AG04450 (cell line): ENCODE measurements at regions of chr1 and their contacts with region 1.

Region 1: DNA sequence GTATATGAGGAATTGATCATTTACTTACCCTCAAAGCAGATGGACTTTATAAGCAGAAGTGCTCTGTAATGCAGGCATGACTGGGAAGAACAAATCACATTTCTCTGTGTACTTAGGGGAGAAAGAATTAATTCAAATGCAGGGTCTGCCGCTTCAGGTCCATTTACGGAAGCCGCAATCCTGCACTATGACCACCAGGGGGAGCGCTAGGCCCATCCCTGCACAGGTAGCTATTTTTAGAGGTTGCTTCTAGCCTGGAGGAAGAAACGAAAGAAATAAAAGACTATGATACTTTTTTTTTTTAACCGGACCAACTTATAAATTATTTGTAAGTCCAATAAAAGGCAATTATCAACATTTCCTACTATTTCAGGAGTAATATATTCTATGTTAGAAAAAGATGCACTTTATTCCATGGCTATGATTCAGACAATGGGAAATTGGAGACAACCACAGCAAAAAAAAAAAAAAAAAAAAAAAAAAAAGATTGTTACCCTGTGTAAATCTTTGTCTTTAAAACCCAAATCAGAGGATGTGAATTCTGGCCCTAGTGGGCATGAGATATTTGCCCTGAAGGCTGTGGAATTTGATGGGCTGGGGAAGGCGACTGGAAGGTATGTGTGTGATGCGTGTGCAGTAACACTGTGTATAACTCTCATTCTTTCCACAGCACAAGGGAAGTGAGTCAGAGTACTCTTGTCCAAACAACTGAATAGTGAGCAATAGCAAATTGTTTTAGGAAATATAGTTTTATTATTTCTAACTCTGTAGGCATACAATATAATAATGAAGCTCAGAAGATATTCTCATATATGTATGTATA is 12.9 kb upstream of the FYB2 start:
- DNase-seq: peak; percentile 91
- H3K4me3 ChIP-seq: no peak overlapping the region
- H3K27ac ChIP-seq: peak overlapping the region; percentile 80
- H3K27me3 ChIP-seq: no peaks in the 10 kb centered on the region
- CTCF ChIP-seq: peak; percentile 98

Region 2: DNA sequence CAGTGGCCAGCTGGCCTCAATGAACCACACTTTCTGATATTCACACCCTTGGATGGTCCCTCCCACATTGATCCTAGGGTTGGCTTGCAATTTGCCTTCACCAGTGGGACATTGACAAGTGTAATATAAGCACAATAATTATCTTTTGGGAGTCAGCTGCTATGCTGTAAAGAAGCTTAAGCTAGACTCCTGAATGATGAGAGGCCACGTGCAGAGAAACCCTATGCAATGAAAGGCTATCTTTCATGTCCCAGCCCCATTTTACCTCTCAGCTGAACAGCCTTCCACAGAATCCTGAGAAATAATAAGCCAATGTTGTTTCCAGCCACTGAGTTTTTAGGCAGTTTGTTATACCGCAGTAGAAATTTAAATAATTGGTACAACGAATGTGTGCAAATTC is 11.5 kb after region 1 on chr1:
- CTCF ChIA-PET with region 1: interaction called, 29 read pairs
- POLR2A ChIA-PET with region 1: no interaction called
- DNase-seq: no peak
- H3K4me3 ChIP-seq: no peak overlapping the region
- H3K27ac ChIP-seq: no peak overlapping the region
- H3K27me3 ChIP-seq: peaks cover 6% of the 10 kb centered on the region
- CTCF ChIP-seq: no peak

Region 3: GRCh38 chr1:56967900-56968832 is 136.1 kb after region 1 on chr1:
- CTCF ChIA-PET with region 1: interaction called, 43 read pairs
- POLR2A ChIA-PET with region 1: no interaction called
- DNase-seq: no peak
- H3K4me3 ChIP-seq: no peak overlapping the region
- H3K27ac ChIP-seq: no peak overlapping the region
- H3K27me3 ChIP-seq: no peaks in the 10 kb centered on the region
- CTCF ChIP-seq: peak; percentile 70

Region 4: GRCh38 chr1:57003398-57004139 is 171.5 kb after region 1 on chr1:
- CTCF ChIA-PET with region 1: no interaction called
- POLR2A ChIA-PET with region 1: no interaction called
- DNase-seq: no peak
- H3K4me3 ChIP-seq: no peak overlapping the region
- H3K27ac ChIP-seq: no peak overlapping the region
- H3K27me3 ChIP-seq: no peaks in the 10 kb centered on the region
- CTCF ChIP-seq: no peak

Region 5: GRCh38 chr1:58047265-58047858 is 1215.3 kb after region 1 on chr1:
- CTCF ChIA-PET with region 1: interaction called, 10 read pairs
- POLR2A ChIA-PET with region 1: interaction called, 7 read pairs
- DNase-seq: no peak
- H3K4me3 ChIP-seq: no peak overlapping the region
- H3K27ac ChIP-seq: no peak overlapping the region
- H3K27me3 ChIP-seq: no peaks in the 10 kb centered on the region
- CTCF ChIP-seq: peak; percentile 66

Region 6: DNA sequence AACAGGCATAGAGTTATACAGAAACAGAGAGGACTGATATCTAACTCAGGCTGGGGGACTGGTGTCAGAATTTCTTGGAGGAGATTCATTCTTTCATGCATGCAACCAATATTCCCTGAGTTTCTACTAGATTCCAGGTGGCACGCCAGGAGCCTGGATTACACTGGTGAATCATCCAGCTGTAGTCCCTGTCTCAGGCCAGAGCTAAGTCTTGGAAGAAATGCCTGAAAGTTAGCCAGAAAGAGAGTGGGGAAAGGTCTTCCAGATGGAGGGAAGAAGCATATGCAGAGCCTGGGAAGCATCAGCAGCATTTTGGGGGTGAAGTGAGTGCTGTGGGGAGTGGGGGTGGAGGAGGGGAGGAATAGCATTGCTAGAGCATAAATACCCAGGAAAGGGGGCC is 1475.3 kb after region 1 on chr1:
- CTCF ChIA-PET with region 1: no interaction called
- POLR2A ChIA-PET with region 1: interaction called, 10 read pairs
- DNase-seq: no peak
- H3K4me3 ChIP-seq: no peak overlapping the region
- H3K27ac ChIP-seq: no peak overlapping the region
- H3K27me3 ChIP-seq: no peaks in the 10 kb centered on the region
- CTCF ChIP-seq: no peak